Activated B cell treated with CpG ODN at 0.5 μM for 24 hours (primary cell): ENCODE measurements at regions of chr17 and their contacts with region 1.

Region 1: GRCh38 chr17:16438557-16439302 is 23.4 kb downstream of the TRPV2 start:
- DNase-seq: peak; percentile 86
- ATAC-seq: peak; percentile 88
- H3K4me3 Mint-ChIP-seq: peak overlapping the region; percentile 99
- H3K27ac Mint-ChIP-seq: peak overlapping the region; percentile 98
- H3K4me1 Mint-ChIP-seq: peaks cover 40% of the 10 kb centered on the region
- H3K27me3 Mint-ChIP-seq: no peaks in the 10 kb centered on the region
- CTCF ChIP-seq: no peak

Region 2: GRCh38 chr17:16353317-16354174 is 85.2 kb before region 1 on chr17 and contains the start of gene CENPV:
- CTCF ChIA-PET with region 1: interaction called, 3 read pairs
- POLR2A ChIA-PET with region 1: interaction called, 5 read pairs
- intact Hi-C with region 1: loop called (anchors 1 kb)
- DNase-seq: peak; percentile 73
- ATAC-seq: peak; percentile 82
- H3K4me3 Mint-ChIP-seq: peak within 1 kb of the TSS; percentile 90
- H3K27ac Mint-ChIP-seq: peak within 1 kb of the TSS; percentile 71
- H3K4me1 Mint-ChIP-seq: peaks cover 18% of the 10 kb centered on the region
- H3K27me3 Mint-ChIP-seq: no peaks in the 10 kb centered on the region
- CTCF ChIP-seq: no peak
- total RNA-seq, gene CENPV: 24.0 and 25.7 TPM in 2 replicates

Region 3: GRCh38 chr17:16415031-16415924 is 23.5 kb before region 1 on chr17 and contains the start of gene TRPV2:
- CTCF ChIA-PET with region 1: interaction called, 11 read pairs
- POLR2A ChIA-PET with region 1: interaction called, 67 read pairs
- intact Hi-C with region 1: loop called (anchors 1 kb)
- DNase-seq: peak; percentile 51
- ATAC-seq: peak; percentile 41
- H3K4me3 Mint-ChIP-seq: peak within 1 kb of the TSS; percentile 95
- H3K27ac Mint-ChIP-seq: peak within 1 kb of the TSS; percentile 97
- H3K4me1 Mint-ChIP-seq: peaks cover 41% of the 10 kb centered on the region
- H3K27me3 Mint-ChIP-seq: no peaks in the 10 kb centered on the region
- CTCF ChIP-seq: no peak
- total RNA-seq, gene TRPV2: 58.3 and 65.8 TPM in 2 replicates

Region 4: GRCh38 chr17:16491703-16492612 is 53.2 kb after region 1 on chr17 and contains the start of gene LRRC75A:
- CTCF ChIA-PET with region 1: no interaction called
- POLR2A ChIA-PET with region 1: no interaction called
- intact Hi-C with region 1: loop called (anchors 5 kb)
- DNase-seq: peak; percentile 57
- ATAC-seq: peak; percentile 91
- H3K4me3 Mint-ChIP-seq: peak within 1 kb of the TSS; percentile 74
- H3K27ac Mint-ChIP-seq: no peak within 1 kb of the TSS
- H3K4me1 Mint-ChIP-seq: peaks cover 8% of the 10 kb centered on the region
- H3K27me3 Mint-ChIP-seq: peaks cover 5% of the 10 kb centered on the region
- CTCF ChIP-seq: no peak
- total RNA-seq, gene LRRC75A: 0.54 and 0.98 TPM in 2 replicates

Region 5: DNA sequence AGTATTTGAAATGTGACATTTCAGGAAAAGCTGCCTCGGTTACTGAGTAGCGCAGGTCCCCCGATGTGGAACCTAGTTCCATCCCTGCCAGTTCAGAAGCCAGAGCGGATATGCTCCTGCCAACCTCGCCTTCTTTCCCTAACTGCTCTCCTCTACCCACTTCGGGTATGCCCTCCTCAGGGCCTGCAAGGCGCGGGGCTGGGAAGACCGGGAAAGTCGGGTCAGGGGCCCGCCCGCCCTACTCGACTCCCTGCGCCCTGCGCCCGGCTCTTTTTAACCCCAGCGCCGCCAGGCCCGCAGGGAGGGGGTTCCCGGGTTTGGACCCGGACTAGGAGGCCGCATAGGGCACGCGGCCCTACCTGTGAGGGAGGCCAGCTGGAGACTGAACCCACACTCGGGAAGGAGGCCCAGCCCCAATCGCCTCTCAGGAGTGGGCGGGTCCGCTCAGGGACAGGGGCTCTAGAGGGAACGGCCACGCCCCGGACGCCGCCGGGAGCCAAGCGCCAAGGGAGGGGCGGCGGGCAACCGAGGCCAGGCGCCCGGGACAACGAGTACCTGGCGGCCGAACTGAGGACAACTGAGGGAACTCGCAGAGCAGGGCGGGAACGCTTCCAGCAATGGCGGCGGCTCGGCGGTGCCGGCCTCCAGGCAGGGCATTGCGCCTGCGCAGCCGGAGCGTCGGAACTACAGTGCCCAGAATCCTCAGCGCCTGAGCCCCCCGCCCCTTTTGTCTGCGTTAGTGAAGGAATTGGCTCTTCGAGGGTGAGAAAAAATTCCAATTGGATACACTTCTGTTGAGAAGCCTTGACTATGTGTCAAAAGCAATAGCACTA is 214.7 kb after region 1 on chr17 and contains the start of gene ZNF624:
- CTCF ChIA-PET with region 1: no interaction called
- POLR2A ChIA-PET with region 1: no interaction called
- intact Hi-C with region 1: loop called (anchors 1 kb)
- DNase-seq: peak; percentile 82
- ATAC-seq: peak; percentile 96
- H3K4me3 Mint-ChIP-seq: peak within 1 kb of the TSS; percentile 88
- H3K27ac Mint-ChIP-seq: peak within 1 kb of the TSS; percentile 37
- H3K4me1 Mint-ChIP-seq: peaks cover 17% of the 10 kb centered on the region
- H3K27me3 Mint-ChIP-seq: no peaks in the 10 kb centered on the region
- CTCF ChIP-seq: no peak
- total RNA-seq, gene ZNF624: 6.3 and 6.9 TPM in 2 replicates